Activated B cell treated with CpG ODN at 0.5 μM for 24 hours (primary cell): ENCODE measurements at regions of chr13 and their contacts with region 1.

Region 1: DNA sequence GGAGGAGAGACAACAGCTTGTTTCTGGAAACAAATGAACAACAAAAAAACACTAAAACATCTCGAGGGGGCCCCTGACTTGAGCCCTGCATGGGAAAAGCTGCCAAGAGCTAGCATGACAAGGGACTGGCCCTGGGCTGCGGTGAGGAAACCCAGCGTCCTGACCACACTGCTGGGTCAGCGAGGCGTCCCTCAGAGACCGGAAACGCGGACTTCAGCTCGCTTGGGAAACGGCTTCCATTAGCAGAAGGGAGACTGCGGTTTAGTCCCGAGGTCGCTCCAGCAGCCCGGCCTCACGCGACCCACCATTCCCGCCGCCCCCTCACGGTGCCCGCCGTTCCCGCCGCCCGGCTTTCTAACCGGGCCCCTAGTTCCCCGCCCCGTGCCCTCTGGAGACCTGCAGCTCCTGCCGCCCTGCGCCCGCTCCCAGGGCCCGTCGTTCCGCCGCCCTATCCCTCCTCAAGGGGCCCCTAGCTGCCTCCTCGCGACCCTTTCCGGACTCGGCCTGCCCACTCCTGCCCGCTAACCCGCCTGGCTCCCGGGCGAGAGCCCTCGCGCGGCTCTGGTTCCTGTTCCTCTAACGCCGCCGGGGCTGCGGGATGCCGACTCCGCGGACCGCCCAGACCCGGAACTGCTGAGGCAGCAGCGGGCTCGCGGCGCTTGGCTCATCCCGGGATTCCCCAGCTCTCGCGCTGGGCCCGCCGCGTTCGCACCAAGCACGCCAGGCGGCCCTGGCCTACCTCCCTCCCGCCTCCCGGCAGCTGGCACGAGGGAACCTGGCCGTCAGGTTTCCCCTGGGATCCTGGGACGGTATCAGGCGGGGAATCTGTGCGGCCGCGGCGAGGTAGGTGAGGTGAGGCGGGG is at the start of gene CCDC122:
- DNase-seq: peak; percentile 83
- ATAC-seq: peak; percentile 86
- H3K4me3 Mint-ChIP-seq: peak within 1 kb of the TSS; percentile 93
- H3K27ac Mint-ChIP-seq: peak within 1 kb of the TSS; percentile 93
- H3K4me1 Mint-ChIP-seq: peaks cover 32% of the 10 kb centered on the region
- H3K27me3 Mint-ChIP-seq: no peaks in the 10 kb centered on the region
- CTCF ChIP-seq: no peak
- total RNA-seq, gene CCDC122: 7.1 and 8.0 TPM in 2 replicates

Region 2: DNA sequence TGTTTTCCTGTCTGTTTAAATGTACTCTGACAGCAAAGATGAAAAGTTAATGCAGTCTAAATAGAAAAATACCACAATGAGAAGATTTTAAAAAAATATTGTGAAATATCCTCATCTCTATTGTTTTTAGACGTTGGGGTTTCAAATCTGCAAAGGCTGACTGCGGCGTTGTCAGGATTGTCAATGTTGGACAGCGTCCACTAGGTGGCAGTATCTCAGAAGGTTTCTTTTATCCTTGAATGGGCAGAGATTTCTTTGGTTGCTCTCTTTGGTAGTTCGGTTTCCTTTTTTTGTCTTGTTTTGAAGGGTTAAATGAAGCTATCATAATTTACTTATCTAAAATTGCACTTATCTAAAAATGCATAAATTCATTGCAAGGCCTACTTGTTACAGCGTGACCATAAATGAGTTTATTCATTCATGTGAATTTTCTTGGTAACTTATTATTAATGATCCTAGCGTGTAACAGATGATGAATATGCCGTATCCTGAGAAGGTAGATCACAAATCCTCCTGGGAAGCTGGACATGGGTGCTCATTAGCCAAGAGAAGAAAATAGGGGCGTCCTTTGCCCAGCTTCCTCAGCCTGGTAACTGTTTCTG is 1284.1 kb before region 1 on chr13:
- CTCF ChIA-PET with region 1: interaction called, 4 read pairs
- POLR2A ChIA-PET with region 1: no interaction called
- intact Hi-C with region 1: loop called (anchors 5 kb)
- DNase-seq: no peak
- ATAC-seq: peak; percentile 64
- H3K4me3 Mint-ChIP-seq: no peak overlapping the region
- H3K27ac Mint-ChIP-seq: no peak overlapping the region
- H3K4me1 Mint-ChIP-seq: no peaks in the 10 kb centered on the region
- H3K27me3 Mint-ChIP-seq: peaks cover 1% of the 10 kb centered on the region
- CTCF ChIP-seq: peak; percentile 84

Region 3: GRCh38 chr13:43085545-43085944 is 793.6 kb before region 1 on chr13:
- CTCF ChIA-PET with region 1: no interaction called
- POLR2A ChIA-PET with region 1: no interaction called
- intact Hi-C with region 1: loop called (anchors 1 kb)
- DNase-seq: no peak
- ATAC-seq: peak; percentile 28
- H3K4me3 Mint-ChIP-seq: no peak overlapping the region
- H3K27ac Mint-ChIP-seq: no peak overlapping the region
- H3K4me1 Mint-ChIP-seq: peaks cover 23% of the 10 kb centered on the region
- H3K27me3 Mint-ChIP-seq: no peaks in the 10 kb centered on the region
- CTCF ChIP-seq: no peak

Region 4: DNA sequence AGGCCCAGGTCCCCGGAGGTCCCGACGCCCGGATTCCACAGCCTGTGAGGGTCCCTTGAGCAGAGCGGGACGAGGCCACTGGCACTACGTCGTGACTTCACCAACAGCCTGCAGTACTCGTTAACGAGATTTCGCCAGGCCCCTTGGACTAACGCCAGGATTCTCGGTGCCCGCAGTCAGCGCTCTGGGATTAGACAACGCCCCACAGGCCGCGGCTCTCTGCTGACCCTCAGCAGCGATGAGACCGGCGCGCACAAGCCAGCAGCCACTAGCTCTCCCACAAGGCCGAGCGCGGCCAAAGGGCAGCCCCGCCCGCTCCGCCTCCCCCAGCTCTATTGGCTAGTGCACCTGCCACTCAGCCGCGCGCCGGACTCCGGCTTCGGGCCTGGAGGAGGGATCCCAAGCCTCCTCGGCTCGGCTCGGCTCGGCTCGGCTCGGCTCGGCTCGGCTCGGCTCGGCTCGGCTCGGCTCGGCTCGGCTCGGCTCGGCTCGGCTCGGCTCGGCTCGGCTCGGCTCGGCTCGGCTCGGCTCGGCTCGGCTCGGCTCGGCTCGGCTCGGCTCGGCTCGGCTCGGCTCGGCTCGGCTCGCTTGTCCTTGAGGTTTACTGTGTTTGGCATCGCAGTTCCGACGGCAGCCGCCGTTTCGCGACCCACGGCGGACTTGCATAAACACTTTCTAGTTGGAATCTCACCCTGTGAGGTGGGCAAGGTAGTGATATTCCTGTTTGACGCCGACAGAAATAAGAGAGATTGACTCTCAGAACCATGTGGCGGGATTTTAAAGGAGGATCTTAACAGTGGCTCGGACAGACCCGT is 262.8 kb after region 1 on chr13:
- CTCF ChIA-PET with region 1: no interaction called
- POLR2A ChIA-PET with region 1: interaction called, 12 read pairs
- intact Hi-C with region 1: loop called (anchors 1 kb)
- DNase-seq: peak; percentile 100
- ATAC-seq: peak; percentile 99
- H3K4me3 Mint-ChIP-seq: peak overlapping the region; percentile 93
- H3K27ac Mint-ChIP-seq: peak overlapping the region; percentile 86
- H3K4me1 Mint-ChIP-seq: peaks cover 29% of the 10 kb centered on the region
- H3K27me3 Mint-ChIP-seq: peaks cover 8% of the 10 kb centered on the region
- CTCF ChIP-seq: no peak

Region 5: GRCh38 chr13:44988973-44989817 is 1110.1 kb after region 1 on chr13 and contains the starts of genes GPALPP1 and NUFIP1:
- CTCF ChIA-PET with region 1: no interaction called
- POLR2A ChIA-PET with region 1: no interaction called
- intact Hi-C with region 1: loop called (anchors 2 kb)
- DNase-seq: peak; percentile 80
- ATAC-seq: peak; percentile 97
- H3K4me3 Mint-ChIP-seq: peak within 1 kb of the TSS; percentile 99
- H3K27ac Mint-ChIP-seq: peak within 1 kb of the TSS; percentile 98
- H3K4me1 Mint-ChIP-seq: peaks cover 37% of the 10 kb centered on the region
- H3K27me3 Mint-ChIP-seq: no peaks in the 10 kb centered on the region
- CTCF ChIP-seq: no peak
- total RNA-seq, gene GPALPP1: 28.8 and 35.8 TPM in 2 replicates
- total RNA-seq, gene NUFIP1: 6.6 and 7.8 TPM in 2 replicates